Mammary epithelial cell (primary cell): ENCODE measurements at regions of chr11 and their contacts with region 1.

Region 1: DNA sequence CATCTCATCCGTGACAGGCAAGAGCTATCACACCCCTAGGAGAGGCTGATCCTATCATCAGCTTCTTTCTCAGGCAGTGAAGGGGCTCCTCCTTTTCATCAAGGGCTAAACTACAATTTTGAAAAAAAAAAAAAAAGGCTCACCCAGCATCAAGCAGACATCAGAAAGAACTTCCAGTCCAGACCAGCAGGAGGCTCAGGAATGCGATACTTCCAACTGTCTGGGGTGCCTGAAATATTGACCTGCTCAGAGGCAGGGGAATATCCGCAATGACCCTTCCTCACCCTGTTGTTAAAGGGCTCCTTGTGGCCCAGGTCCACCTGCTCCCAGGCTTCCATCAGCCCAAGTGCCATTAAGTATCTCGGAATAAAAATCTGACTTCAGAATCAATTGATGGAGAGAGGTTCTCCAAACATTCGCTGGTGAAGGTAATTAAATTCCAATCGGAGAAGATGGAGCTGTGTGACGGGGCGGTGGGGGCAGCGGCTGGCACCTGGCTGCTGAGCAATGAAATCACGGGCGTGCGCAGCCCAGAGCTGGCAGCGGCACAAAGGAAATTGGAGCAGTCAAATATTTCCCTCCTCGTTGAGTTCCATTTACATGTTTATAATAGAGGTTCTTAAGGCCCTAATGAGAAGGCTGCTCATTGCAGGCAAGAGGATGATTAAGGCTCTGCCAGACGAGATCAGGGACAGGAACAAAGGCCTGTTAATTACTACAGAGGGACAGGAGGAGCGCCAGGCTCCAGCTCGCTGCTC is 69.0 kb upstream of the THY1 start:
- DNase-seq: no peak
- H3K4me3 ChIP-seq: no peak overlapping the region
- H3K27ac ChIP-seq: no peak overlapping the region
- H3K4me1 ChIP-seq: no peaks in the 10 kb centered on the region
- H3K27me3 ChIP-seq: peaks cover 5% of the 10 kb centered on the region
- CTCF ChIP-seq: peak; percentile 37 to 44

Region 2: DNA sequence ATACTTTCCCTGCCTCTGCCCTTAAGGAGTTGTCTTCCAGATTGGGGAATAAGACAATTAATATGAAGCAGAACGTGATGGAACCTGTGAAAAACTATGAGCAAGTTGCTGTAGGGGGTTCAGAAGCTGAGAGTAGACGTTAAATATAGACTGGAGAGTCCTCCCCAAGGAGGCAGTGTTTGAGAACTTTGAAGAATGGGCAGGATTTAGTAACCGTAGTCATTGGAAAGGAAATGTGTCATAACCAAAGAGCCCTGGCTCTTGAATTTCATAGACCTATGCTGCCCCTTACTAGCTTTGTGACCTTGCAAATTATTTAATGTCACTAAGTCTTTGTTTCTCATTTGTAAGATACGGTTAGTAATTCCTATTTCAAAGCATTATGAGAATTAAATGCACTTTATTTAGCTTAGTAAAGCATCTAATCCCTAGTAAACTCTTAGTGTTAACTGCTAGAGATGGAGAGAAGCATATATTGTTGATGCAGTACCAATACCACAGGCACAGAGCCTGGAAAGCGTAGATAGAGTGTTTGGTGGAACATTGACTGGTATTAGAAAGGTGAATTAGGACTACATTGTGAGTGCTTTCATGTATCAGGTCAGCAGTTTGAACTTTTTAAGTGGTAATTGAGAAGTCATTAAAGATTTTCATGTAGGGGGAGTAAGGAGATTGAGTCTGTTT is 229.1 kb before region 1 on chr11:
- CTCF ChIA-PET with region 1: interaction called, 19 read pairs
- dilution Hi-C with region 1: no loop called
- in situ Hi-C with region 1: no loop called
- intact Hi-C with region 1: no loop called
- DNase-seq: peak; percentile 31
- H3K4me3 ChIP-seq: no peak overlapping the region
- H3K27ac ChIP-seq: no peak overlapping the region
- H3K4me1 ChIP-seq: peaks cover 23% of the 10 kb centered on the region
- H3K27me3 ChIP-seq: no peaks in the 10 kb centered on the region
- CTCF ChIP-seq: peak; percentile 2 to 20

Region 3: GRCh38 chr11:119584193-119585037 is 92.5 kb after region 1 on chr11:
- CTCF ChIA-PET with region 1: interaction called, 16 read pairs
- dilution Hi-C with region 1: no loop called
- in situ Hi-C with region 1: no loop called
- intact Hi-C with region 1: no loop called
- DNase-seq: peak; percentile 61
- H3K4me3 ChIP-seq: peak overlapping the region; percentile 34 to 37 (median 36)
- H3K27ac ChIP-seq: no peak overlapping the region
- H3K4me1 ChIP-seq: peaks cover 14% of the 10 kb centered on the region
- H3K27me3 ChIP-seq: no peaks in the 10 kb centered on the region
- CTCF ChIP-seq: no peak